GM13977 (cell line): ENCODE measurements at regions of chr14 and their contacts with region 1.

Region 1: DNA sequence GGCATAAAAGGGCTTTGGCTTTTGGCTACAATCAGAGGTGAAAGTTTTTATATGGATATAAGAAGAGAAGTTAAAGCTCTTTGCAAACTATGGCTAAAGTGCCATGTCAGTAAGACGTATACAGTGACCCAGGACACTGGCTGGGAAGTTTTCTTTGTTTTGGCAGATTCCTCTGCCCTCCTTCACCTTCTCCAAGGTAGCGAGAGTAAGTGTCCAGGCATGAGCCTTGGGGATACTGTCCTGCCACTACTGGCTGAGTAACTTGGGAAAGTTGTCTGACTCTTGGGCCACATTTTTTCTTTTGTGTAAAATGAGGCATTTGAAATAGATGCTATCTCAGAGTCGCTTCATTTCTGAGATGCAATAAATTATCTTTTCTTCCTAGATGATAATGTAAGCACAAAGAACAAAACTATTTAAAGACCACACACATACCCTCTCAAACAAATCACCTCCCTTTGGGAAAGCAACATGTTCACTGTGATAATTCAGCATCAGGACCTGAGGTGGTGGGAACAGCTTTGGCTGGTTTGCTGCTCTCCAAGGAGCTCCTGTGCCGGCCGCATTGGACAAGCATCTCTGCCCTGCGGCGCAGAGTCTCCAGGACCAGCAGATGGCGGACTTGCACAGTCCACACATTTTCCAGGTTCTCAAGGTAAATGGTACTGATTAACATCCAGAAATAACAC is 106.3 kb downstream of the PTCSC3 start:
- DNase-seq: peak; percentile 44
- CTCF ChIP-seq: peak; percentile 90

Region 2: DNA sequence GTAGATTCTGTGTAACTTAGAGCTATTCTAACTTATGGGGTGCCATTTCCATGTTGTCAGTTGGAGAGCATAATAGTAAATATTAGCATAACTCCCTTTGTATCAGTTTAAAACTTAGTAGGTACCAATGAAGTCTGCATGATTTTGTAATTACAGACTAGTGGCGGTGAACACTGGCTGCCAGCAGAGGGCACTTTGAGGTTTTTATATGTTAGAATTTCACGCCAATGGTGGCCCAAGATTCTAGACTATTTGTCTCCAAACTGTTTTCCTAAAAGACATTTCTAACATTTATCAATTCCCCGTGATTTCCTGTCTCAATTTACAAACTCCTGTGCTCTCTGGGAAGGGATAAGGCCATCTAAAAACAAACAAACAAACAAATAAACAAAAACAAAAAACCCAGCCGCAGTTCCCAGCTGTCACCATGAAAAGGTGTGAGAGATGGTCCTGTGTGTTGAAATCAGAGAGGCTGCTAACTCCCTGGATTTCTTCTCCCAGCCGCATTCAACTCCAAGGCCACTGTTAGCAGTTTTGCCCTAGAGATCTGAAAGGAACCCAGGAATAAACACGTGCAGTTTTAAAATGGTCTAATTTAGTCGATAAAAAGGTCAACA is 186.4 kb before region 1 on chr14:
- in situ Hi-C with region 1: loop called (anchors 10 kb)
- DNase-seq: peak; percentile 44
- CTCF ChIP-seq: peak; percentile 75

Region 3: DNA sequence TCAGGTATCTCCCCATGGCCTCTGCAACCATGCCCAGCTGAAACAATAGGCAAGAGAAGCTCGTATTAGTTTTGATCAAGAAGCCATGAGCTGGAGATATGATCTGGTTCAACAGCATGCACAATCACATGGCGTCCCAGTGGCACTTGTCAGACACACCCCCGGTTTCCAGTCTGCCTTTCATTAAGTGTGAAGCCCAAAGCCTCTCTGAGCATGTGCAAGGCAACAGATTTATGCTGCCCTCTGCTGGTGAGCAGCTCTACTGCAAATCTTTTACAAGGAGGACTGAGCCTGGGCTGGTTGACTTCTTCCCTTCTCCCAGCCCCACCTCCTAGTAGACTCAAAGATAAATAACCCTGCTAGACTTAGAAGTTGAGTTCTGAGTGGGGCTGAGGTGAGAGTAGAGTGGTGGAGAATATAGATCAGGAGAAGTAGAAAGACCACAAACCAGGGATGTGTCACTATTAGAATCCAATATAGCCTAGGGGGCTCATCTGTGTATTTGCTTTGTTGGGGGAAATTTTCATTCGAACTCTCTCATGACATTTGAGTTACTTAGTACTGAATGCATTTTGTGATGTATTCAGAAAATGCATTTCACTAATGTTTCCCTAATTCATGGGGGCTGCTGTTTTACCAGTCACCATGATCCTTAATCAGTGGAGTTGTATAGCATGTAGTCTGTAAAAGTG is 304.0 kb after region 1 on chr14:
- in situ Hi-C with region 1: loop called (anchors 25 kb)
- DNase-seq: peak; percentile 43
- CTCF ChIP-seq: peak; percentile 91